ENCODE measurements at regions of chr4 and their contacts with region 1.

Region 1: DNA sequence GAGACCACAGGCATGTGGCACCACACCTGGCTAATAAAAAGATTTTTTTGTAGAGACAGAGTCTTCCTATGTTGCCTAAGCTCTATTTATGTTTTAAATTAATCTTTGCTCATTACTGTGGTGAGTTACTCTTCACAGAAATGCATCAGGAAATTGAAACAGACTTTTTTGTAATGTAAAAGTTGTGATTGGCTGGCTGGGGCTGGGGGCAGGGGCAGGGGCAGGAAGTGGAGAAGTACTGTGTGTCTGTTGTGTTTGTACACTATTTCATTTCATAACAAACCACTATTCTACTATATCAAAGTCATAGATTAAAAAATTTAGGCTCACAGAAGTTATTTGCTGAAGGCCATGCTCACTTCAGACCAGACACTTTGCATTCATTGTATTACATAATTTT is 19.1 kb upstream of the ABRAXAS1 start:
- DNase-seq: peak; percentile 49
- H3K4me3 Mint-ChIP-seq: no peak overlapping the region
- H3K27ac Mint-ChIP-seq: peak overlapping the region; percentile 64
- H3K4me1 Mint-ChIP-seq: peaks cover 14% of the 10 kb centered on the region
- H3K27me3 Mint-ChIP-seq: no peaks in the 10 kb centered on the region

Region 2: GRCh38 chr4:83484500-83485461 is 19.2 kb before region 1 on chr4 and contains the start of gene ABRAXAS1:
- CTCF ChIA-PET with region 1: interaction called, 9 read pairs
- intact Hi-C with region 1: loop called (anchors 1 kb)
- DNase-seq: peak; percentile 92
- H3K4me3 Mint-ChIP-seq: peak within 1 kb of the TSS; percentile 99
- H3K27ac Mint-ChIP-seq: peak within 1 kb of the TSS; percentile 91
- H3K4me1 Mint-ChIP-seq: peaks cover 19% of the 10 kb centered on the region
- H3K27me3 Mint-ChIP-seq: no peaks in the 10 kb centered on the region
- total RNA-seq, gene ABRAXAS1: 19.7 to 20.9 TPM

Region 3: DNA sequence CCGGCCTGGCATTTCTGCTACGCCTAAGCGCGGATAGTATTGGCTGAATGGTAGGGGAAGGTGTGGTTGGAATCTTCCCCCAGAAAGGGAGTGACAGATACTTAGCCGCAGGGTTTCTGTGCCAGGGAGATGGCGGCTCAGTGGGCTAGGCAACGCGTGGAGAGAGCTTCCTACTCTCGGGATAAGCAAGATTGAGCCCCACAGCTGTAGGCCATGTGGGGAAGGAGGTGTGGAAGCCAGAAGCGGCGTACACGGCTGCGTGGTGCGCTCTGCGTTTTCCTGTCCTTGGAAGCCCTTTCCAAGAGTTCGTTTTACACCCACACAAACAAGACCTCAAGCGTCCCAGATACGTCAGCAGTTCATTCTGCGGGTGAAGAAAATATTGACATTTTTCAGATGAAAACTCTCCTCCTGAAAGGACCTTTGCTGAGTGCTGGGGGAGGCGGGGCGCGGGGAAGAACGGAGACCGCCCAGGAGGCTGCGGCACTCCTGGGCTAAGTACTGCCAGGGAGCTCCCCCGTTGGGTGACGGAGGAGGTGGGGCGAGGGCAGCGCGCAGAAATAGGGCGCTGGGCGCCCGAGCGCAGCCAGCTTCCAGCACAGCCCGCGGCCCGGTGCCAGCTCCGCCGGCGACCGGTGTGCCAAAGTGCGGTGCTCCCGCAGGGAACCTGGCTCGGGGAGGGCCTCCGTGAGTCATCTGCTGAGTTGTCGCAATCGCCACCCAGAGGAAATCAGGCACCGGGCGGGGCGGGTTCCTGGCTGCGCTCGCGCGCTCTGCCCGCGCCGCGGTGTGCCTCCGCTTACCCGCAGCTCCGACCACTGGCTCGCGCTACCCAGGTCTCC is 31.8 kb after region 1 on chr4 and contains the start of gene GPAT3:
- CTCF ChIA-PET with region 1: interaction called, 3 read pairs
- intact Hi-C with region 1: loop called (anchors 1 kb)
- DNase-seq: peak; percentile 83
- H3K4me3 Mint-ChIP-seq: peak within 1 kb of the TSS; percentile 73
- H3K27ac Mint-ChIP-seq: peak within 1 kb of the TSS; percentile 15
- H3K4me1 Mint-ChIP-seq: peaks cover 14% of the 10 kb centered on the region
- H3K27me3 Mint-ChIP-seq: peaks cover 2% of the 10 kb centered on the region
- total RNA-seq, gene GPAT3: 2.0 to 3.1 TPM

Region 4: GRCh38 chr4:83548151-83548905 is 44.4 kb after region 1 on chr4:
- CTCF ChIA-PET with region 1: interaction called, 8 read pairs
- intact Hi-C with region 1: loop called (anchors 5 kb)
- DNase-seq: peak; percentile 82
- H3K4me3 Mint-ChIP-seq: no peak overlapping the region
- H3K27ac Mint-ChIP-seq: no peak overlapping the region
- H3K4me1 Mint-ChIP-seq: peaks cover 3% of the 10 kb centered on the region
- H3K27me3 Mint-ChIP-seq: no peaks in the 10 kb centered on the region

Region 5: DNA sequence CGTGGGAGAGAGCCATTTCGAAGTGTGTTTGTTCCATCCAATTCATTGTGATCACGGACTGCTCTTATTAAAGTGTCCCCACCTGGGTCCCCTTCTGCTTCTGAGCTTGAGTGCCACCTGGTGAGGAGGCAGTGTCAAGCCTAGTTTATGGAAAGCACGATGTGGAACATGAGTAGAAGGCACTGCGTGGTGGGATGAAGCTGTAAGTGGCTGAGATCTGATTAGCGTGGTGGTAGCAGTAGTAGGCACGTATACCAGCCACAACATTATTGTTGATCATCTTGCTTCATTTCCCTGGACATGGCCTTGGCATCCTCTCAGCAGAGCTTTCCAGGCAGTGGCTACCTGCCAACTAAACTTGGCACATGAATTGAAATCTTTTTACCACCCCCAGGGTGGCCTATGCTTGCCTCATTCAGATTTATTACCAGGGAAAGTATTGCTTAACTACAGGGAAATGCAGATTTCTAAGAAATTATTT is 78.4 kb after region 1 on chr4:
- CTCF ChIA-PET with region 1: no interaction called
- intact Hi-C with region 1: loop called (anchors 1 kb)
- DNase-seq: peak; percentile 8
- H3K4me3 Mint-ChIP-seq: no peak overlapping the region
- H3K27ac Mint-ChIP-seq: no peak overlapping the region
- H3K4me1 Mint-ChIP-seq: no peaks in the 10 kb centered on the region
- H3K27me3 Mint-ChIP-seq: no peaks in the 10 kb centered on the region